ENCODE measurements at regions of chr2 and their contacts with region 1.

Region 1: DNA sequence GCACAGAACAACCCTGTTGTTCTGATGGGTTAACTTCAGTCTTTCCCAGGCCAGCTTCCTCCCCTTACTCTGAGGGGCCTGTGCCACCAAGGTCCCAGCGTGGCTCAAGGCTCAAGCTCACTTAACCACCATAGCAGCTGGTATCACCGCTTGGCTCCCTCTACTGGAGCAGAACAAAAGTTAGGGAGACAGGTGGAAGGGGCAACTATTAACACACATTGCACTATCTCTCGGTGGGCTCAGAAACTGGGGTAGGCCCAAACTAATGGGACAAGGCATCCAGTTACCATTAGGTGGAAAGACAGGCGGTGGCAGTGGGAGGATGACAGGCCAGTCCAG is 88.7 kb upstream of the ATL2 start:
- DNase-seq: peak; percentile 63 to 66
- ATAC-seq: peak; percentile 77 to 89
- H3K4me3 ChIP-seq: no peak overlapping the region
- H3K27ac ChIP-seq: no peak overlapping the region
- H3K4me1 ChIP-seq: peaks cover 8% of the 10 kb centered on the region; the same call in 2 of the 3 replicates
- CTCF ChIP-seq: peak; percentile 61
- EP300 ChIP-seq: no peak
- POLR2A ChIP-seq: no peak
- RAD21 ChIP-seq: peak; percentile 64 to 68

Region 2: GRCh38 chr2:38430597-38431207 is 35.1 kb before region 1 on chr2:
- CTCF ChIA-PET with region 1: interaction called, 11 read pairs
- POLR2A ChIA-PET with region 1: no interaction called
- DNase-seq: no peak
- ATAC-seq: no peak
- H3K4me3 ChIP-seq: no peak overlapping the region
- H3K27ac ChIP-seq: no peak overlapping the region
- H3K4me1 ChIP-seq: peaks cover 17% of the 10 kb centered on the region
- CTCF ChIP-seq: no peak
- EP300 ChIP-seq: no peak
- POLR2A ChIP-seq: no peak
- RAD21 ChIP-seq: no peak

Region 3: GRCh38 chr2:38446906-38447561 is 18.7 kb before region 1 on chr2:
- CTCF ChIA-PET with region 1: interaction called, 20 read pairs
- POLR2A ChIA-PET with region 1: no interaction called
- DNase-seq: no peak
- ATAC-seq: peak in 1 of 2 experiments; percentile 17; a peak in 1 of 6 replicates
- H3K4me3 ChIP-seq: no peak overlapping the region
- H3K27ac ChIP-seq: no peak overlapping the region
- H3K4me1 ChIP-seq: no peaks in the 10 kb centered on the region
- CTCF ChIP-seq: no peak
- EP300 ChIP-seq: no peak
- POLR2A ChIP-seq: no peak
- RAD21 ChIP-seq: no peak

Region 4: GRCh38 chr2:38529208-38529607 is 63.5 kb after region 1 on chr2:
- CTCF ChIA-PET with region 1: no interaction called
- POLR2A ChIA-PET with region 1: no interaction called
- DNase-seq: no peak
- ATAC-seq: no peak
- H3K4me3 ChIP-seq: no peak overlapping the region
- H3K27ac ChIP-seq: no peak overlapping the region
- H3K4me1 ChIP-seq: peaks cover 6% of the 10 kb centered on the region; the same call in 1 of the 3 replicates
- CTCF ChIP-seq: no peak
- EP300 ChIP-seq: no peak
- POLR2A ChIP-seq: no peak
- RAD21 ChIP-seq: no peak

Measured in A549 (cell line).